Natural killer cell (primary cell): ENCODE measurements at regions of chr19 and their contacts with region 1.

Region 1: GRCh38 chr19:23686621-23687423 is at the start of gene ZNF675:
- DNase-seq: peak; percentile 85 to 94
- ATAC-seq: peak; percentile 89 to 99 (median 92)
- H3K4me3 ChIP-seq: peak within 1 kb of the TSS; percentile 68
- H3K4me3 Mint-ChIP-seq: peak within 1 kb of the TSS; percentile 98
- H3K27ac ChIP-seq: peak within 1 kb of the TSS; percentile 75
- H3K27ac Mint-ChIP-seq: peak within 1 kb of the TSS; percentile 97
- H3K4me1 ChIP-seq: no peaks in the 10 kb centered on the region
- H3K4me1 Mint-ChIP-seq: peaks cover 23 to 33% of the 10 kb centered on the region in 2 donors
- H3K27me3 ChIP-seq: no peaks in the 10 kb centered on the region
- H3K27me3 Mint-ChIP-seq: no peaks in the 10 kb centered on the region
- CTCF ChIP-seq: no peak
- total RNA-seq, gene ZNF675: 11.3 to 21.5 (median 17.4) TPM

Region 2: DNA sequence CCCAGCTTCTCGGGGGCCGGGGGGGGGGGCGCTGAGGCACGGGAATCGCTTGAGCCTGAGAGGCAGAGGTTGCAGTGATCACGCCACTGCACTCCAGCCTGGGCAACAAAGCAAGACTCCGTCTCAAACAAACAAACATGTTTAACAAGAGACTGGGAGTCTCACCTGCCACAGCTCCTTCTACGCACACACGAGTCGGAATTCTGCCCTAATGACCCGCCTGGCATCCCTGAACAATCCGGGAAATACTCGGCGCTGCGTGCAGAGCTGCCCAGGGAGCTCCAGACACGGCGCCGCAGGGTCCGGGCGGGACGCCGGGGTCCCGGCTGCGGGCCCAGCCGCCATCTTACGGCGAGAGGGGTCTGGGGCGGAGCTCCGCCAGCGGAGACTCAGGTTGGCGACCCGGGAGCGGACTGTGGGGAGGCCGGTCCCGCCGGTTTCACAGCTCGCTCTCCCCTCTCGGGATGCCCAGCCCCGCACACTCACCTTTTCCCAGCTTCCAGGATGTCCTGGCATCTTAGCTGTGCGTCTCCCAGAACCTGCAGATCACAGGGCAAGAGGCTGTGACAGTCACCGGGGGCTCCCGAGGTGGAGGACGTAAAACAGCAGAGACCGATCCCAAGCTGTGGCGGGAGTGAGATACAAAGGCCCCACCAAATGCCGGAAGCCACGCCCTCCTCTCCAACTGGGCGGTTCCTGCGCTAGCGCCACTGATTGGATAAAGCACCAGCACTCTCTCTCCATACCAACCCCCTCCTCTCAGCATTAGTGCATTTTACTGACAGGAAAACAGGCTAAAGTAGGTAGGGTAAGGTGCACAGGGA is 413.0 kb before region 1 on chr19:
- intact Hi-C with region 1: loop called (anchors 10 kb)
- DNase-seq: peak; percentile 88 to 94
- ATAC-seq: peak; percentile 98 to 100 (median 98)
- H3K4me3 ChIP-seq: peak overlapping the region; percentile 81
- H3K4me3 Mint-ChIP-seq: peak overlapping the region; percentile 97
- H3K27ac ChIP-seq: peak overlapping the region; percentile 72
- H3K27ac Mint-ChIP-seq: peak overlapping the region; percentile 86 to 91
- H3K4me1 ChIP-seq: peaks cover 8% of the 10 kb centered on the region
- H3K4me1 Mint-ChIP-seq: peaks cover 26% of the 10 kb centered on the region in 2 donors
- H3K27me3 ChIP-seq: no peaks in the 10 kb centered on the region
- H3K27me3 Mint-ChIP-seq: no peaks in the 10 kb centered on the region
- CTCF ChIP-seq: no peak

Region 3: GRCh38 chr19:23395041-23395721 is 291.6 kb before region 1 on chr19 and contains the start of gene ZNF91:
- intact Hi-C with region 1: loop called (anchors 5 kb)
- DNase-seq: peak; percentile 90 to 96
- ATAC-seq: peak; percentile 90 to 98 (median 93)
- H3K4me3 ChIP-seq: peak within 1 kb of the TSS; percentile 89
- H3K4me3 Mint-ChIP-seq: peak within 1 kb of the TSS; percentile 98
- H3K27ac ChIP-seq: peak within 1 kb of the TSS; percentile 96
- H3K27ac Mint-ChIP-seq: peak within 1 kb of the TSS; percentile 96 to 99
- H3K4me1 ChIP-seq: peaks cover 17% of the 10 kb centered on the region
- H3K4me1 Mint-ChIP-seq: peaks cover 37% of the 10 kb centered on the region in 2 donors
- H3K27me3 ChIP-seq: no peaks in the 10 kb centered on the region
- H3K27me3 Mint-ChIP-seq: no peaks in the 10 kb centered on the region
- CTCF ChIP-seq: no peak
- total RNA-seq, gene ZNF91: 92.3 to 144 (median 96.7) TPM

Region 4: DNA sequence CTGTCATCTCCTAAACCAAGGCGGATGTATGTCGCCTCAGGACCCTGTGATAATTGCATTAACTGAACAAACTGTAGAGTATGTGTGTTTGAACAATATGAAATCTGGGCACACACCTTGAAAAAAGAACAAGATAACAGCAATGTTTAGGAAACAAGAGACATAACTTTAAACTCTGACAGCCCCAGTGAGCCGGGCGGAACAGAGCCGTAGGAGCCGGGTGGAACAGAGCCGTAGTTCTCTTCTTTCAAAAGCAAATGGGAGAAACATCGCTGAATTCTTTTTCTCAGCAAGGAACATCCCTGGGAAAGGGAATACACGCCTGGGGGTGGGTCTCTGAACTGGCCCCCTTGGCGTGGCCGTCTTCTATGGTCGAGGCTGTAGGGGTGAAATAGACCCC is 32.0 kb after region 1 on chr19:
- intact Hi-C with region 1: no loop called
- DNase-seq: no peak
- ATAC-seq: no peak
- H3K4me3 ChIP-seq: no peak overlapping the region
- H3K4me3 Mint-ChIP-seq: no peak overlapping the region
- H3K27ac ChIP-seq: no peak overlapping the region
- H3K27ac Mint-ChIP-seq: no peak overlapping the region
- H3K4me1 ChIP-seq: no peaks in the 10 kb centered on the region
- H3K4me1 Mint-ChIP-seq: peaks cover 5 to 6% of the 10 kb centered on the region in 2 donors
- H3K27me3 ChIP-seq: no peaks in the 10 kb centered on the region
- H3K27me3 Mint-ChIP-seq: peaks cover 0 to 4% of the 10 kb centered on the region in 2 donors
- CTCF ChIP-seq: no peak

Region 5: DNA sequence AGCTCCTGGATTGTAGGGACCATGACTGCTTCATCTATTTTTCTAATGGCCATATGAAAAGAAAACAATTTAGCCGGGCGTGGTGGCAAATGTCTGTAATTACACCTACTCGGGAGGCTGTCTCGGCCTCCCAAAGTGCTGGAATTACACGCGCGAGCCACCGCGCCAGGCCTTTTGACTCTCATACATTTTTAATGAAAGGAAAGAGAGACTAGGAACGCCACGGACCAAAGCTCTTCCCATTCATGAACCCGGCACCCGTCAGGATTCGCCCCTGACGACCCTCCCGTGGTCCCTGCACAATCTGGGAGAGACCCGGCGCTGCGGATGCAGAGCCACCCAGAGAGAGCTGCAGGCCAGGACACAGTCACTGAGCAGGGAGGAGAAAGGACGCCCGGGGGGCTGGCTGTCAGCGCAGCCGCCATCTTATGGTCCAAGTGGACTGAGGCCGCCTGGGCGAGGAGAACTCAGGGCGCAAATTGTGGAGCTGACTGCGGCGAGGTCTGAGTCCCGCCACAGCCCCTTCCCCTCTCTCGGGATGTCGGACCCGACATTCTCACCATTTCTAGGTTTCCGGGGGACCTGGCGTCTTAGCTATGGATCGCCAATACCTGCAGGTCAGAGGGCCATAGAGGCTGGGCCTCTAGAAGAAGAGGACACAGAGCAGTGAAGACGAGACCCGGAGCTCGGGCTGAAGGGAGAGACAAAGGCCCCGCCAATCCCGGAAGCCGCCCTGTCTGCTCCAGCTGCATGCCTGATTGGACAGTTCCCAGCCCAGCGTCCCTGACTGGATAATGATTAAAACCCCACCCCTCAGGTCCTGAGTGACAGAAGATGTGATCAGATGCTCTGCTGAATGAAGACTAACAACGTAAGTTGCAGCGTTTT is 71.6 kb after region 1 on chr19 and contains the start of gene ZNF681:
- intact Hi-C with region 1: loop called (anchors 2 kb)
- DNase-seq: peak; percentile 79 to 92
- ATAC-seq: peak; percentile 87 to 94 (median 87)
- H3K4me3 ChIP-seq: peak within 1 kb of the TSS; percentile 76
- H3K4me3 Mint-ChIP-seq: peak within 1 kb of the TSS; percentile 93
- H3K27ac ChIP-seq: peak within 1 kb of the TSS; percentile 82
- H3K27ac Mint-ChIP-seq: peak within 1 kb of the TSS; percentile 94 to 95
- H3K4me1 ChIP-seq: peaks cover 27% of the 10 kb centered on the region
- H3K4me1 Mint-ChIP-seq: peaks cover 18 to 47% of the 10 kb centered on the region in 2 donors
- H3K27me3 ChIP-seq: no peaks in the 10 kb centered on the region
- H3K27me3 Mint-ChIP-seq: no peaks in the 10 kb centered on the region
- CTCF ChIP-seq: peak; percentile 35
- total RNA-seq, gene ZNF681: 1.2 to 2.3 (median 1.9) TPM

Region 6: DNA sequence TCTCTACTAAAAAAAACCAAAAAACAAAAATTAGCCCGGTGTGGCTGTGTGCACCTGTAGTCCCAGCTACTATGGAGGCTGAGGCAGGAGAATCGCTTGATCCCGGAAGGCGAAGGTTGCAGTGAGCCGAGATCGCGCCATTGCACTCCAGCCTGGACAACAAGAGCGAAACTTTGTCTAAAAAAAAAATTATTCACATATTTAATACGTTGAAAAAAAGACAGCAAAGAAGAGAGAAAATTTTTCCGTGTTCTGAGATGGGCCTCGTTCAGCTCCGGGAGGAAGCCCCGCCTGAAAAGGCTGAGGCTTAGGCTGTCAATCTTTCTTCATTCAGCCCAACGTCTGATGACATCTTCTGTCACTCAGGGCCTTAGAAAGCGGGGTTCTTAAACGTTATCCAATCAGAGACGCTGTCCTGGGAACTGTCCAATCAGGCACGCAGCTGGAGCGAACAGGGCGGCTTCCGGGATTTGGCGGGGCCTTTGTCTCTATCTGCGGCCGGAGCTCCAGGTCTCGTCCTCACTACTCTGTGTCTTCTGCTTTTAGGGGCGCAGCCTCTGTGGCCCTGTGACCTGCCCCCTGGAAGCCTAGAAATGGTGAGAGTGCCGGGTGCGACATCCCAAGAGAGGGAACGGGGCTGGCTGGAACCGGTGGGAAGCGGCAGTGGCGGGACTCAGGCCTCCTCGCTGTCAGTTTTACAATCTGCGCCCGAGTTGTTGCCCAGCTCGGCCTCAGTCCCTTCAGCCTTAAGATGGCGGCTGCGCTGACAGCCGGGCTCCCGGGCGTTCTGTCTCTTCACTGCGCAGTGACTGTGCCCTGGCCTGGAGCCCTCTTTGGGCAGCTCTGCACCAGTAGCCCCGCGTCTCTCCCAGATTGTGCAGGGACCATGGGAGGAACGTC is 227.8 kb after region 1 on chr19 and contains the start of gene ZNF726:
- intact Hi-C with region 1: loop called (anchors 10 kb)
- DNase-seq: peak; percentile 83 to 93
- ATAC-seq: peak; percentile 96 to 97 (median 96)
- H3K4me3 ChIP-seq: peak within 1 kb of the TSS; percentile 57
- H3K4me3 Mint-ChIP-seq: peak within 1 kb of the TSS; percentile 95
- H3K27ac ChIP-seq: peak within 1 kb of the TSS; percentile 46
- H3K27ac Mint-ChIP-seq: peak within 1 kb of the TSS; percentile 86 to 94
- H3K4me1 ChIP-seq: peaks cover 13% of the 10 kb centered on the region
- H3K4me1 Mint-ChIP-seq: peaks cover 0 to 9% of the 10 kb centered on the region in 2 donors
- H3K27me3 ChIP-seq: no peaks in the 10 kb centered on the region
- H3K27me3 Mint-ChIP-seq: no peaks in the 10 kb centered on the region
- CTCF ChIP-seq: no peak
- total RNA-seq, gene ZNF726: 4.8 to 6.4 (median 5.8) TPM

Region 7: GRCh38 chr19:24086974-24087595 is 400.3 kb after region 1 on chr19 and contains the start of gene ZNF254:
- intact Hi-C with region 1: loop called (anchors 2 kb)
- DNase-seq: peak; percentile 79 to 86
- ATAC-seq: peak; percentile 98 to 100 (median 99)
- H3K4me3 ChIP-seq: peak within 1 kb of the TSS; percentile 81
- H3K4me3 Mint-ChIP-seq: peak within 1 kb of the TSS; percentile 95
- H3K27ac ChIP-seq: peak within 1 kb of the TSS; percentile 88
- H3K27ac Mint-ChIP-seq: peak within 1 kb of the TSS; percentile 93 to 96
- H3K4me1 ChIP-seq: peaks cover 18% of the 10 kb centered on the region
- H3K4me1 Mint-ChIP-seq: peaks cover 6 to 16% of the 10 kb centered on the region in 2 donors
- H3K27me3 ChIP-seq: no peaks in the 10 kb centered on the region
- H3K27me3 Mint-ChIP-seq: no peaks in the 10 kb centered on the region
- CTCF ChIP-seq: no peak
- total RNA-seq, gene ZNF254: 16.7 to 20.5 (median 19.8) TPM